K562 (cell line): ENCODE measurements at regions of chr16 and their contacts with region 1.

Region 1: GRCh38 chr16:2155091-2156021 is at the start of gene TRAF7:
- DNase-seq: peak; percentile 92 to 100 (median 96)
- ATAC-seq: peak; percentile 86
- H3K4me3 ChIP-seq: peak within 1 kb of the TSS; percentile 55
- H3K27ac ChIP-seq: peak within 1 kb of the TSS; percentile 82
- H3K4me1 ChIP-seq: peaks cover 22 to 70% of the 10 kb centered on the region in 2 experiments; a peak in 4 of 5 replicates
- H3K27me3 ChIP-seq: no peaks in the 10 kb centered on the region
- CTCF ChIP-seq: no peak
- EP300 ChIP-seq: 0 out of 2 replicates have a peak, but pooled peaks have one; percentile 5
- POLR2A ChIP-seq: peak; percentile 100
- RAD21 ChIP-seq: 0 out of 4 replicates have a peak, but pooled peaks of 1 of the 2 experiments have one; percentile 13
- polyA plus RNA-seq, gene TRAF7: 1.1 to 1.5 TPM

Region 2: GRCh38 chr16:1964506-1965395 is 190.6 kb before region 1 on chr16 and contains the start of gene RPS2:
- CTCF ChIA-PET with region 1: no interaction called
- POLR2A ChIA-PET with region 1: interaction called, 44 read pairs
- in situ Hi-C with region 1: no loop called
- intact Hi-C with region 1: no loop called
- DNase-seq: peak; percentile 95 to 100 (median 98)
- ATAC-seq: peak; percentile 73
- H3K4me3 ChIP-seq: peak within 1 kb of the TSS; percentile 89
- H3K27ac ChIP-seq: peak within 1 kb of the TSS; percentile 85
- H3K4me1 ChIP-seq: peaks cover 8 to 50% of the 10 kb centered on the region in 2 experiments; a peak in 3 of 5 replicates
- H3K27me3 ChIP-seq: no peaks in the 10 kb centered on the region
- CTCF ChIP-seq: no peak
- EP300 ChIP-seq: no peak
- POLR2A ChIP-seq: peak; percentile 100
- RAD21 ChIP-seq: no peak
- polyA plus RNA-seq, gene RPS2: 834 to 1,305 TPM

Region 3: GRCh38 chr16:2003827-2004641 is 151.3 kb before region 1 on chr16:
- CTCF ChIA-PET with region 1: interaction called, 4 read pairs
- POLR2A ChIA-PET with region 1: interaction called, 12 read pairs
- in situ Hi-C with region 1: no loop called
- intact Hi-C with region 1: no loop called
- DNase-seq: peak; percentile 84 to 97 (median 91)
- ATAC-seq: peak; percentile 93
- H3K4me3 ChIP-seq: no peak overlapping the region
- H3K27ac ChIP-seq: peak overlapping the region; percentile 47; the same call in 1 of the 3 replicates
- H3K4me1 ChIP-seq: peaks cover 20 to 94% of the 10 kb centered on the region in 2 experiments
- H3K27me3 ChIP-seq: no peaks in the 10 kb centered on the region
- CTCF ChIP-seq: peak; percentile 96 to 99 (median 99)
- EP300 ChIP-seq: 0 out of 2 replicates have a peak, but pooled peaks have one; percentile 5
- POLR2A ChIP-seq: peak; percentile 28; the same call in 1 of the 2 replicates
- RAD21 ChIP-seq: peak; percentile 61 to 73

Region 4: GRCh38 chr16:2023098-2023925 is 132.0 kb before region 1 on chr16:
- CTCF ChIA-PET with region 1: interaction called, 15 read pairs
- POLR2A ChIA-PET with region 1: interaction called, 35 read pairs
- in situ Hi-C with region 1: no loop called
- intact Hi-C with region 1: no loop called
- DNase-seq: peak; percentile 90 to 96 (median 92)
- ATAC-seq: peak; percentile 85
- H3K4me3 ChIP-seq: peak overlapping the region; percentile 41
- H3K27ac ChIP-seq: peak overlapping the region; percentile 76
- H3K4me1 ChIP-seq: peaks cover 21 to 79% of the 10 kb centered on the region in 2 experiments; a peak in 4 of 5 replicates
- H3K27me3 ChIP-seq: no peaks in the 10 kb centered on the region
- CTCF ChIP-seq: peak; percentile 93 to 97 (median 96)
- EP300 ChIP-seq: no peak
- POLR2A ChIP-seq: peak; percentile 69
- RAD21 ChIP-seq: peak; percentile 90 to 94

Region 5: GRCh38 chr16:2170080-2170479 is 14.7 kb after region 1 on chr16:
- CTCF ChIA-PET with region 1: no interaction called
- POLR2A ChIA-PET with region 1: interaction called, 46 read pairs
- in situ Hi-C with region 1: no loop called
- intact Hi-C with region 1: no loop called
- DNase-seq: no peak
- ATAC-seq: no peak
- H3K4me3 ChIP-seq: no peak overlapping the region
- H3K27ac ChIP-seq: no peak overlapping the region
- H3K4me1 ChIP-seq: peaks cover 0 to 44% of the 10 kb centered on the region in 2 experiments; a peak in 2 of 5 replicates
- H3K27me3 ChIP-seq: no peaks in the 10 kb centered on the region
- CTCF ChIP-seq: no peak
- EP300 ChIP-seq: no peak
- POLR2A ChIP-seq: no peak
- RAD21 ChIP-seq: no peak

Region 6: DNA sequence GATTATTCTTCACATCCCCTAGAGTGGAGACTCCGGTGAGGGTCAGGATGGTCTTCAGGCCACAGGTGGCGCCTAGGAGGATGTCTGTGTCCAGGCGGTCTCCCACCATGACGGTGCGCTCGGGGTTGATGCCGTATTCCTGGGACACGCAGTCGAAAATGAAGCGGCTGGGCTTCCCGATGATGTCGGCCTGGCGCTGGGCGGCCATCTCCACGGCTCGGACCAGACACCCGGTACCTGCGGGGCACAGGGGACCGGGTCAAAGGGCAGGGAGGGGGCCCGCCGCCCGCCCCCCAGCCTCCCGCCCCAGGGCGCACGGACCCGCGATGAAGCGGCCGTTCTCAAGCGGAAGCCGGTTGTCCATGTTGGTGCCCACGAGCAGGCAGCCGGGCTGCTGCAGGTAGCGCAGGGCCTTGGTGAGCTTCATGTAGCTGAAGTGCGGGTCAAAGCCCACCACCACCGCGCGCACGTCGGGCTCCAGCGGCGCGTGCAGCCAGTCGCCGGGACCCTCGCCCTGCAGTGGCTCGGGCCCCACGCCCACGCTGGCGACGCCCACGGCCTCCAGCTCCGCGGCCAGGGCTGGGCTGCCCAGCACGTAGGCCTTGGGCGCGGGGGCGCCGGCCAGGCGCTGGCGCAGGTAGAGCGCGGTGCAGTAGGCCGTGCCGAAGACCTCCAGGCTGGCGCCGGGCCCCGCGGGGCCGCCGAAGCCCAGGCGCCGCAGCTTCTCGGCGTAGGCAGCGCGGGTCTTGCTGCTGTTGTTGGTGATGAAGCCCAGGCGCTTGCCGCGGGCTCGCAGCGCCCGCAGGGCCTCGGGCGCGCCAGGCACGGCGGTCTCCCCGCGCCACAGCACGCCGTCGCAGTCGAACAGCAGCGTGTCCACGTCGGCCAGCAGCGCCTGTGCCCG is 58.7 kb after region 1 on chr16:
- CTCF ChIA-PET with region 1: no interaction called
- POLR2A ChIA-PET with region 1: interaction called, 17 read pairs
- in situ Hi-C with region 1: no loop called
- intact Hi-C with region 1: no loop called
- DNase-seq: peak in 2 of 4 experiments; percentile 48 to 56
- ATAC-seq: no peak
- H3K4me3 ChIP-seq: peak overlapping the region; percentile 85
- H3K27ac ChIP-seq: peak overlapping the region; percentile 89
- H3K4me1 ChIP-seq: peaks cover 31 to 79% of the 10 kb centered on the region in 2 experiments
- H3K27me3 ChIP-seq: no peaks in the 10 kb centered on the region
- CTCF ChIP-seq: 0 out of 6 replicates have a peak, but pooled peaks of 1 of the 3 experiments have one; percentile 13
- EP300 ChIP-seq: no peak
- POLR2A ChIP-seq: no peak
- RAD21 ChIP-seq: no peak